ENCODE measurements at regions of chr15 and their contacts with region 1.

Region 1: GRCh38 chr15:42385206-42385979 is 26.1 kb downstream of the CAPN3 start:
- DNase-seq: peak; percentile 67
- H3K4me3 ChIP-seq: no peak overlapping the region
- H3K27ac ChIP-seq: no peak overlapping the region
- H3K4me1 ChIP-seq: no peaks in the 10 kb centered on the region
- H3K27me3 ChIP-seq: no peaks in the 10 kb centered on the region
- CTCF ChIP-seq: peak; percentile 88

Region 2: DNA sequence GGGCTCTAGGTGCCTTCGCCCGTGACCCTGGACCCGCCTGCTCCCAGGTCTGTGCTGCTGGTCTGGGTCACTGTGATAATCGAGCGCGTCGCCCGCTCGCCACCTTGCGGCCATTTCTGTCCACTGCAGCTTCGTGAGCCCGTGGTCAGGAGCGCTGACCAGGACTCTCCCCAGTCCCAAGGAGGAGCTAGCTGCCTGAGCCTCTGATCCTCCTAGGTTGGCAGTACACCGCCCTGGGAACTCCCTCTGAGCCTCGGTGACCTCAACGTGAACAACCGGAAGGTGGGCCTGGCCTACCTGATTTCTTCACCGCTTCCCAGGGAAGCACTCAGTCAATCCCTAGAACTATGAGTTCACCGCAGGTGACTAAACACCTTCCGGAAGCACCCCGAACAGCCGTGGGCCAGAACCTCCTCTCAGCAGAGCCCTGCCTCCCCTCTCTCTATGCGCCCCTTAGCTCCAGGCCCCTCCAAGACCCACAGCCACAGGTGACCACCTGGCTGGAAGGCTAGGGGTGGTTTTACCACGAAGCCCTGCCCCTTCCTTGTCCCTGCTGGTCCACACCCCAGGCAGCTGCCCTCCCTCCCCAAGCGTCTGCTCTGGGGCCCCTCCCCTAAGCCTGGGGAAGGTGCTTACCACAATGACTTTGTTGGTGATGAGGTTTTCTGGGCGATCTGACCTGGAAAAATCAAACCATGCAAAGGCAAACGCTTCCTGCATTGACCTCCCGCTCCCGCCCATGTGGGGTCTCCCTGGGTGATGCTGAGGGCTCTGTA is 300.7 kb before region 1 on chr15:
- CTCF ChIA-PET with region 1: no interaction called
- POLR2A ChIA-PET with region 1: no interaction called
- intact Hi-C with region 1: loop called (anchors 10 kb)
- DNase-seq: peak; percentile 45
- H3K4me3 ChIP-seq: no peak overlapping the region
- H3K27ac ChIP-seq: no peak overlapping the region
- H3K4me1 ChIP-seq: peaks cover 4% of the 10 kb centered on the region
- H3K27me3 ChIP-seq: no peaks in the 10 kb centered on the region
- CTCF ChIP-seq: peak; percentile 95

Region 3: DNA sequence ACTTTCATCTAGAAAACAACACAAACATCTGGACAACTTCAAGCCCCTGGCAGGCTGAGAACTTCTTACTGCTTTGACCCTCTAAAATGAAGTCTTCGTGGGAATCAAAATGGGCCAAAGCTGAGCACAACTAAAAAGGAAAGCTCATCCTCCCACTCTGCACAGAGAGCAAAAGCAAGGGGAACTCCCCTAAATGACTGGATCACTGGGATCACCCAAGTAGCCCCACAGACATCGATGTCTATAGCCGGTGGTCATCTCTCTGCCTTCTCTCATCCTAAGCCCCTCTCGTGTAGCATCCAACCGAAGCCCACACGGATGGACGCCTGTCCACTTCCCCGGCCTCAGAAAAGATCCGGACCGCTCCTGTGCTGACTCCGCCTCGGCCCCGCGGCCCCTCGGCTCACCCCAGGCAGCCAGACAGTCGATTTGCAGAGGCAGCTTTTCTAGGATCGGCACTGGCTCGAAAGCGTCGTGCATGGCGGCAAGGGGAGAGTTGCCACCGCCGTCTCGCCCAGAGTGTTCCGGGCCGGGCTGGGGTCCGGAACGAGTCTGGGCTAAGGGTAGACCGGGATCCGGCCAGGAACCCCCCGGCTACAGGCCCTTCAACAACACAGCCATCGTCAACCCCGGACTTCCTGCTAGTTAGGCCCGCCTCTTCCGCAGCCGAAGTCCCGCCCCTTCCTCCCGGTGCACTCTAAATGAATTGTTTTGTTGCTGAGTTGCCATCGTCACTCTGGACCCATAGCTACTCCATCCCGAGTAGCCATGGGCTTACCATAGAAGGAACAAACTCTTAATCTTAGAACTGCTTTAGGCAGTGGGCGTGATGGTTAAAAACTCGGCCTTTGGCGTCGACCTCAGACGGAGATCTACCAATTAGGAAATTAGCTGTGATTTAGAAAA is 177.5 kb before region 1 on chr15 and contains the start of gene VPS39:
- CTCF ChIA-PET with region 1: no interaction called
- POLR2A ChIA-PET with region 1: no interaction called
- intact Hi-C with region 1: no loop called
- DNase-seq: peak; percentile 89
- H3K4me3 ChIP-seq: peak within 1 kb of the TSS; percentile 97
- H3K27ac ChIP-seq: peak within 1 kb of the TSS; percentile 78
- H3K4me1 ChIP-seq: peaks cover 10% of the 10 kb centered on the region
- H3K27me3 ChIP-seq: no peaks in the 10 kb centered on the region
- CTCF ChIP-seq: no peak
- total RNA-seq, gene VPS39: 46.9 and 47.9 TPM in 2 replicates

Measured in A673 (cell line).